AG04449 (cell line): ENCODE measurements at regions of chr9 and their contacts with region 1.

Region 1: DNA sequence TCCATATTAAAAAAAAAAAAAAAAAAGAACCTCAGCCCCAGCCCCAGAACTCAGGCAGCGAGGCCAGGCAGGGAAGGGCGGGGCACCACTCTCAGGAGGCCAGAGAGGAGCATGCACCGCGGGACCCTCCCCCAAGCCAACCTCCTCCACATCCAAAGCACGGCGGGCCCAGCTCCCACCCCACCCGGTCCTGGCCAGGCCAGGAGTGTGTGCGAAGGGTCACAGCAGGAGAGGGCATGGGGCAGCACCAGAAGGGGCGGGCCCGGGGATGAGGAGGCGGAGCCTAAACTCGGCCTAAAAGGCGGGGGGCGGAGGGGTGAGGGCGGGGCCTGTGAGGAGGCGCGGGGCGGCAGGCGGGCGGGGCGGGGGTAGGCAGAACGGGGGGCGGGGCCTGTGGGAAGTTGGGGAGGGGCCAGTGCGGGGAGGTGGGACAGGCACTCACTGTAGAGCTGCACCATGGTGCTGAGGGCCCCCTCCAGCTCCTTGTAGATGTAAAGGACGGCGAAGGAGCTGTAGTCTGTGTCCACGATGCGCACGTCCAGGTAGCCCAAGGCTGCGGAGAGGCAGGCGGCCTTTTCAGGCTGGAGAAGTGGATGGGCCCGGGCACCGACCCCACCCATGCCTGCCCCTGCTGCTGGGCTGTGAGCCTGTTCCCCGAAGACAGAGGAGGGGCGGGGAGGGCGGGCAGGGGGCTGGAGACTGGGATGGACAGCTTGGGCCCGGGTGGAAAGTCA is 1.2 kb downstream of the LCN15 start:
- DNase-seq: no peak
- H3K4me3 ChIP-seq: no peak overlapping the region
- CTCF ChIP-seq: no peak

Region 2: DNA sequence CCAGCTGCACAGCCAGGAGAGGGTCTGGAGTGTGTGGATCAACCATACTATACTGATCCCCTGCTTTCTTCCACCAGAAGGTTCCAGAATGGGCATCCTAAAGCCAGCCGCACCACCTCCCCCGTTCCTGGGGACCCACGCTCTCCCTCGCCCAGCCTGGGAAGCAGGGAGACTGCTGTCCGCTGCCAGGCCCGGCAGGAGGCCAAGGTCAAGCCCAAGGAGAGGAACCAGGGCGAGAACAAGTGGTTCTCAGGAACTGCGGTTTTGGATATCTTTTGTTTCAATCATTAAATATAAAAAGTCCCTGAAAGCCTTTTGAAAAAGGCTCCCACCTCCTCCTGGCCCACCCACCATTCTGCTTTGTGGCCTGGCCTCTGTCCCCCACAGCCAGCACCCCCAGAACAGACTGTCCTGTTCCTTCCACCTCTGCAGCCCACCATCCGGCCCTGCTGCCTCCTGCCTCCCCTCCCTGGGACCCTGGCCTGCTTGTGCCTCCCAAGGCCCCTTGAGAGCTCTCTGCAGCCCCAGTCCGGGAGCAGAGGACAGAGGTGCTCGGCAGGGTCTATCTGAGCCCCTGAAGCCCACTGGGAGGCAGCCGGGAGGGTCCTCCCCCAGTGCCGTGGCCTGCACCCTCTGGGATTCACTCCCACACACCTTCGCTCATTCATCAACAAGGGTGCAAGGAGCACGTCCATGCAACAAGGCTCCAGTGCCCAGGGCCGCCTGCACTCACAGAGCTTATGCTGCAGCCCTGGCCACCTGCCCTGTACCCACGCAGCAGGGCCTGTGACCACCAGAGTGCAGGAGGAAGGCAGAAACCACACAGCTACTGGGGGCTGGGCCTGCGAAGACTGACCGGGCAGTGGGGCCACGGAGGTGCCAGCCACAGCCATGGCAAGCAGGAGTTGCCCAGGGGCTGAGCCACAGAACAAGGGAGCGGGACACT is 14.1 kb before region 1 on chr9:
- CTCF ChIA-PET with region 1: interaction called, 19 read pairs
- POLR2A ChIA-PET with region 1: no interaction called
- DNase-seq: no peak
- H3K4me3 ChIP-seq: no peak overlapping the region
- CTCF ChIP-seq: no peak

Region 3: GRCh38 chr9:136779808-136780207 is 16.7 kb after region 1 on chr9:
- CTCF ChIA-PET with region 1: interaction called, 64 read pairs
- POLR2A ChIA-PET with region 1: no interaction called
- DNase-seq: no peak
- H3K4me3 ChIP-seq: no peak overlapping the region
- CTCF ChIP-seq: peak; percentile 1